Ascending aorta (tissue), 2 donors: ENCODE measurements at regions of chr19 and their contacts with region 1.

Region 1: GRCh38 chr19:45770192-45771101 is 1.4 kb upstream of the SIX5 start:
- DNase-seq: peak; percentile 89 to 98
- H3K4me3 ChIP-seq: peak overlapping the region; percentile 65 to 84
- H3K27ac ChIP-seq: peak overlapping the region; percentile 81 to 96
- H3K4me1 ChIP-seq: peaks cover 12 to 26% of the 10 kb centered on the region in 2 donors
- H3K27me3 ChIP-seq: no peaks in the 10 kb centered on the region
- CTCF ChIP-seq: peak; percentile 96 to 97 (median 97)

Region 2: GRCh38 chr19:45584332-45585157 is 185.9 kb before region 1 on chr19 and contains the start of gene OPA3:
- intact Hi-C with region 1: loop called (anchors 5 kb)
- DNase-seq: peak; percentile 99 to 100
- H3K4me3 ChIP-seq: peak within 1 kb of the TSS; percentile 67
- H3K27ac ChIP-seq: peak within 1 kb of the TSS; percentile 95 to 97
- H3K4me1 ChIP-seq: peaks cover 0 to 10% of the 10 kb centered on the region in 2 donors
- H3K27me3 ChIP-seq: no peaks in the 10 kb centered on the region
- CTCF ChIP-seq: no peak
- total RNA-seq, gene OPA3: 4.5 TPM

Region 3: GRCh38 chr19:45730389-45731288 is 39.8 kb before region 1 on chr19 and contains the start of gene FBXO46:
- intact Hi-C with region 1: loop called (anchors 1 kb)
- DNase-seq: peak; percentile 95 to 99
- H3K4me3 ChIP-seq: peak within 1 kb of the TSS; percentile 88 to 89
- H3K27ac ChIP-seq: peak within 1 kb of the TSS; percentile 48 to 56
- H3K4me1 ChIP-seq: peaks cover 0 to 10% of the 10 kb centered on the region in 2 donors
- H3K27me3 ChIP-seq: no peaks in the 10 kb centered on the region
- CTCF ChIP-seq: peak in 1 of 3 experiments; percentile 9
- total RNA-seq, gene FBXO46: 27.5 TPM

Region 4: DNA sequence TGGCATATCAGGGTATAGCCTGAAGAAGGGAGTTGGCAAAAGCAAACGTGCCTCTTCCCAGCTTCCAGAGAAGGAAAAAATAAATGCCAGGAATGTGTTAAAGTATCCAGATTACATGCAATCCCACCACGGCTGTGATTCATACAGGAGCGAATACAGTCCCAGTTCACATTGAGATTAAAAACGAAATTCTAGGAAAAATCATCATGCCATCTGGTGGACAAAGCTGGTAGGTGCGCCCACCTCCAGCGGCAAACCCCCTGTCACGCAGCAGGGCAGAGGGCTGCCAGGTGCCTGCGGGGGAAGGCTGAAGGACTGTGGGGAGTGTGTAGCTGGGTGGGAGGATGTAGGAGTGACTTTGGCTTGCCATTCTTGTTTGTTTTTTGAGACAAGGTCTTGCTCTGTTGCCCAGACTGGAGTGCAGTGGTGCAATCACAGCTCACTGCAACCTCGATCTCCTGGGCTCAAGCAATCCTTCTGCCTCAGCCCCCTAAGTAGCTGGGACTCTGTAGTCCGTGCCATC is 28.6 kb after region 1 on chr19:
- intact Hi-C with region 1: loop called (anchors 1 kb)
- DNase-seq: peak in 1 of 2 donors; percentile 86
- H3K4me3 ChIP-seq: no peak overlapping the region
- H3K27ac ChIP-seq: no peak overlapping the region
- H3K4me1 ChIP-seq: no peaks in the 10 kb centered on the region
- H3K27me3 ChIP-seq: no peaks in the 10 kb centered on the region
- CTCF ChIP-seq: peak; percentile 80 to 93 (median 90)

Region 5: DNA sequence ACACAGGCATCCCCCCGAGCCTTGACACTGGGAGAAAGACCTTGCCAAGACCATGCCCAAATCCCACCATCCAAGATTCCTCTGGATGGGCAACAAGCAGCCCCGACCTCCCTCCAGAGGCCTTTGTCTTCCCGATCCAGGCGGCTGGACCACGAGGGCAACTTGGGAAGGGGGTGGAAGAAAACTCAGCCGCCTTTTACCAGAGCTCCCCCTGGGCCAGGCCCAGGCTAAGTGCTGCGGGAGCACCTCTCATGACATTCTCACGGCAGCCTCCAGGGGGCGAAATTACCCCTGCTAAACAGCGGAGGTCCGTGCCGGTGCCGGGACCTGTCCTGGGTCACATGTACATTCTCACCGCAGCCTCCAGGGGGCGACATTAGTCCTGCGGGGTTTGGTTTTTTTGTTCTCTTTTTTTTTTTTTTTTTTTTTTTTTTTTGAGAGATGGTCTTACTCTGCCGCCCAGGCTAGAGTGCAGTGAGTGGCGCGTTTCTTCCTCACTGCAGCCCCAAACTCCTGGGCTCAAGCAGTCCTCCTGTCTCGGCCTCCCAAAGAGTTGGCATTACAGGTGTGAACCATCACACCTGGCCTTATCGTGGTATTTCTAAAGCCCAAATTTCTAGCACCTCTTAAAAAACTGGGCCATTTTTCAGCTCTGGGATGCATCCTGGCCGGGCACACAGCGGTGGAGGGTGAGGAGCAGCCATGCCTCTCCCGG is 46.7 kb after region 1 on chr19:
- intact Hi-C with region 1: no loop called
- DNase-seq: peak; percentile 59 to 96
- H3K4me3 ChIP-seq: no peak overlapping the region
- H3K27ac ChIP-seq: no peak overlapping the region
- H3K4me1 ChIP-seq: peaks cover 0 to 4% of the 10 kb centered on the region in 2 donors
- H3K27me3 ChIP-seq: no peaks in the 10 kb centered on the region
- CTCF ChIP-seq: peak; percentile 94 to 99 (median 95)

Region 6: GRCh38 chr19:45886427-45887199 is 116.2 kb after region 1 on chr19:
- intact Hi-C with region 1: loop called (anchors 2 kb)
- DNase-seq: peak; percentile 64 to 96
- H3K4me3 ChIP-seq: peak overlapping the region; percentile 71 to 95
- H3K27ac ChIP-seq: peak overlapping the region; percentile 87 to 88
- H3K4me1 ChIP-seq: peaks cover 22 to 37% of the 10 kb centered on the region in 2 donors
- H3K27me3 ChIP-seq: no peaks in the 10 kb centered on the region
- CTCF ChIP-seq: no peak